GM12878 (cell line): ENCODE measurements at regions of chr6 and their contacts with region 1.

Region 1: GRCh38 chr6:156719720-156720563 is 57.2 kb upstream of the ARID1B start:
- DNase-seq: peak; percentile 65
- ATAC-seq: peak; percentile 89
- H3K4me3 ChIP-seq: peak overlapping the region; percentile 58
- H3K27ac ChIP-seq: peak overlapping the region; percentile 96
- H3K4me1 ChIP-seq: peaks cover 37% of the 10 kb centered on the region
- H3K27me3 ChIP-seq: no peaks in the 10 kb centered on the region
- CTCF ChIP-seq: no peak
- EP300 ChIP-seq: peak; percentile 23 to 59; a peak in 2 of 4 replicates
- POLR2A ChIP-seq: peak; percentile 77
- RAD21 ChIP-seq: no peak

Region 2: DNA sequence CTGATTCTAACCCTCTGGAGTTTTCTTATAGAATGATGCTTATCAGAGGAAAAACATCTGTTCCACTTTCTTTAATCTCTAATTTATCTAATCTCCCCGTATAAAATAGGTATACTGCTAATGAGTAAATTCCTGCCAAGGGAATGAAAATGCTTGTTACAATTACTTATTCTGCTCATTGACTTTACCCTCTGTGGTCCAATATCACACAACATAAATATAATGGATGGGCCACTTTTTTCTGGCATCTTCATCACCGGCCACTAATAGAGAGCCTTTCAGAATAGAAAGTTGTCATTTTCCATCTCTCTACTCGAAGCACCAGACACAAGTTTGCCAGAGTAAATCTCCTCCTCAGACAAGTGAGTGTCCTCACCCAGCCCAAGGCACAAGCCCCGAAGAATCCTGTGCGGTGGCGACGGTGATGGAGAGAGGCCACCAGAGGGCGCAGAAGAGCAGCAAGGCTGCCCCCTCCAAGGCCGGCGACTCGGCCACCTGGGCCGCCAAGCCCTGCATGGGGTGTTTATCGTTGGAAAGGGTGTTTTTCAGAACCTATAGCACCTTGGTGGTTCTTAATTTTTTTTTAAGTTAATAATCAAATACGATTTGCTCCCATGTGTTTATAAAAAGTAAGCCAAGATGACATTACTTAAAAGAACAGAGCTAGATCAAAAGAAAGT is 155.7 kb before region 1 on chr6:
- CTCF ChIA-PET with region 1: interaction called, 5 read pairs
- POLR2A ChIA-PET with region 1: no interaction called
- RAD21 ChIA-PET with region 1: interaction called, 9 read pairs
- SMC1A ChIA-PET with region 1: interaction called, 4 read pairs
- in situ Hi-C with region 1: no loop called
- intact Hi-C with region 1: loop called (anchors 1 kb)
- DNase-seq: peak; percentile 46
- ATAC-seq: peak; percentile 100
- H3K4me3 ChIP-seq: no peak overlapping the region
- H3K27ac ChIP-seq: no peak overlapping the region
- H3K4me1 ChIP-seq: no peaks in the 10 kb centered on the region
- H3K27me3 ChIP-seq: no peaks in the 10 kb centered on the region; a peak in 1 of 4 replicates
- CTCF ChIP-seq: peak; percentile 91 to 94 (median 93)
- EP300 ChIP-seq: no peak
- POLR2A ChIP-seq: no peak
- RAD21 ChIP-seq: peak; percentile 97

Region 3: GRCh38 chr6:156658186-156658966 is 61.6 kb before region 1 on chr6:
- CTCF ChIA-PET with region 1: no interaction called
- POLR2A ChIA-PET with region 1: interaction called, 3 read pairs
- RAD21 ChIA-PET with region 1: interaction called, 11 read pairs
- SMC1A ChIA-PET with region 1: interaction called, 7 read pairs
- in situ Hi-C with region 1: no loop called
- intact Hi-C with region 1: no loop called
- DNase-seq: no peak
- ATAC-seq: no peak
- H3K4me3 ChIP-seq: no peak overlapping the region
- H3K27ac ChIP-seq: no peak overlapping the region
- H3K4me1 ChIP-seq: peaks cover 17% of the 10 kb centered on the region
- H3K27me3 ChIP-seq: no peaks in the 10 kb centered on the region
- CTCF ChIP-seq: no peak
- EP300 ChIP-seq: no peak
- POLR2A ChIP-seq: no peak
- RAD21 ChIP-seq: no peak

Region 4: DNA sequence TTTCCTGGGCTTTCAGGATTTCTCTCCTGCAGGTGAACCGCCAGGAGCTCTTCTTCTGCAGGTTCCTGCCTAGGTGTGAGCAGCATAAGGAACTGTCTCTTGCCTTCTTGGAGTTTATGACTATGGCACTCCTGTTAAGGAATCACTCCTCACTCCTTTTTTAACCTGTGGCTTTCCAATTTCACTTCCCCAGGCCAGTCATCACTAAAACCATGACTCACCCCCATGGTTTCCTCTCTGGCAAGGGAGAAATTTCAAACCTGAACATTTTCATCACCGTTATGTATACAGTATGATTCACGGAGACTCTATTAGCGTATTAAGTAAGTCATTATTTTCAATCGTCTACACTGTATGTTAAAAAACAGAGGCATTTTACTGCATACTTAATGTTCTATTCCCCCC is 20.9 kb before region 1 on chr6:
- CTCF ChIA-PET with region 1: interaction called, 13 read pairs
- POLR2A ChIA-PET with region 1: interaction called, 33 read pairs
- RAD21 ChIA-PET with region 1: interaction called, 136 read pairs
- SMC1A ChIA-PET with region 1: interaction called, 266 read pairs
- in situ Hi-C with region 1: no loop called
- intact Hi-C with region 1: loop called (anchors 1 kb)
- DNase-seq: peak; percentile 85
- ATAC-seq: peak; percentile 66
- H3K4me3 ChIP-seq: peak overlapping the region; percentile 65
- H3K27ac ChIP-seq: peak overlapping the region; percentile 97
- H3K4me1 ChIP-seq: peaks cover 57% of the 10 kb centered on the region
- H3K27me3 ChIP-seq: no peaks in the 10 kb centered on the region
- CTCF ChIP-seq: no peak
- EP300 ChIP-seq: peak; percentile 85 to 92
- POLR2A ChIP-seq: no peak; the same call in 1 of the 2 replicates
- RAD21 ChIP-seq: peak; percentile 39; the same call in 1 of the 2 replicates

Region 5: DNA sequence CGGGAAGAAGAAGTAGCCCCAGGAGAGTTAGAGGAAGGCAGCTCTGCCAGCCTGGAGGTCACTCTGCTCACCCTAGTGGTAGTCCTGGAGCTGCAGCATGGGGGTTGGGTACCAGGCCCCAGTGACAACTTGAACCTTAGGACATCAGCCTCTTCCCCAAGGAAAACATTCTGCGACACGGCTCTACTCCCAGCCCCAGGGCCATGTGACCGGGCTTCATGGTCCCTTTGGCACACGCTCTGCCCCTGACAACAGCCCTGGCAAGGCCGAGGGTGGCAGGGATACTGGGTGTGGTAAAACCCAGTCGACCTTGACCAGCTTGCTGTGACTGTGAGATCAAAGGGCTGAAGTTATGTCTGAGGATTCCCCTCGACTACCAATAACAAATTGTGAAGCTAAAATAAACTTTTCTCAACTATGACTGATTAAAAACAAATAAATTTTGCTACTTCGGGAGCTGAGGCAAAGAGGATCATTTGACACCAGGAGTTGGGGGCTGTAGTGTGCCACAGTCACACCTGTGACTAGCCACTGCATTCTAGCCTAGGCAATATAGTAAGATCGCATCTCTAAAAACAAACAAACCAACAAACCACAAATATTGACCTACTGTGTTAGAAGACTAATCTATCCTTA is 32.8 kb after region 1 on chr6:
- CTCF ChIA-PET with region 1: interaction called, 42 read pairs
- POLR2A ChIA-PET with region 1: interaction called, 36 read pairs
- RAD21 ChIA-PET with region 1: interaction called, 119 read pairs
- SMC1A ChIA-PET with region 1: interaction called, 121 read pairs
- in situ Hi-C with region 1: no loop called
- intact Hi-C with region 1: loop called (anchors 2 kb)
- DNase-seq: peak; percentile 63
- ATAC-seq: peak; percentile 94
- H3K4me3 ChIP-seq: no peak overlapping the region
- H3K27ac ChIP-seq: no peak overlapping the region
- H3K4me1 ChIP-seq: peaks cover 25% of the 10 kb centered on the region
- H3K27me3 ChIP-seq: no peaks in the 10 kb centered on the region
- CTCF ChIP-seq: peak; percentile 40 to 67 (median 43); a peak in 5 of 6 replicates
- EP300 ChIP-seq: peak in 1 of 2 experiments; percentile 53; a peak in 1 of 4 replicates
- POLR2A ChIP-seq: no peak
- RAD21 ChIP-seq: no peak; the same call in 1 of the 2 replicates

Region 6: DNA sequence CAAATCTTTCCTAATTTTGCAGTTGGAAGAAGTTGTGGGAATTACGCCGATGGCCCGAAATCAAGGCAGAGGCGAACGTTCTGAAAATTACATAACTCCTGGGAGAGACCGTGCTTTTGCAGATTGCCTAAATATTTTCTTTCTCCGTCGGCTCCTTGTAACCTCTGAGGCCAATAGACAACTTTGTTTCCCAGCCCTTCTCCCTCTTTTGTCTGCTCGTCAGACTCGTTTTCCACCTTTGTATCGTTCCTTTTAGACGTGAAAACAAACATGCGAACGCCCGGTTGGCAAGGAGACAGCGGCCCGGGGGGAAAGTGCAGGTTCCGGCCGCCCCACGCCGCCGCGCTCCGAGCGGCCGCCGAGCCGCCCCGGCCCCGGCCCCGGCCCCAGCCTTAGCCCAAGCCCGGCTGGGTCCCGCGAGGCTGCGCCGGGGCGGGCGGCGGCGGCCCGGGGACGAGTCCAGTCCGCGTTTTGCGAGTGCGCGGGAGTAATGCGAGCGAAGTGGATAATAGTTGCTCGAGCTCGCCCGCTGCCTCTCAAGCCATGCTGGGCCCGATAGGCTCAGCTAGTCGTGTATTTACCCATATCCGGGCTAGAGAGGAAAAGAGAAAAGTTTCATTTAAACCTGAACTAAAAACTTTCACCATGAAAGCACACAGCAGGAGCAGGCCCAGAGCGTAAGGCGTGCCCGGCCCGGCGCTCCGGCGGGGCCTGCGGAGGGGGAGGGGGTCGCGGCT is 57.1 kb after region 1 on chr6 and contains the start of gene ARID1B:
- CTCF ChIA-PET with region 1: interaction called, 6 read pairs
- POLR2A ChIA-PET with region 1: interaction called, 19 read pairs
- RAD21 ChIA-PET with region 1: interaction called, 32 read pairs
- SMC1A ChIA-PET with region 1: interaction called, 21 read pairs
- in situ Hi-C with region 1: no loop called
- intact Hi-C with region 1: loop called (anchors 2 kb)
- DNase-seq: no peak
- ATAC-seq: peak; percentile 59
- H3K4me3 ChIP-seq: peak within 1 kb of the TSS; percentile 92
- H3K27ac ChIP-seq: peak within 1 kb of the TSS; percentile 94
- H3K4me1 ChIP-seq: peaks cover 17% of the 10 kb centered on the region
- H3K27me3 ChIP-seq: no peaks in the 10 kb centered on the region
- CTCF ChIP-seq: no peak
- EP300 ChIP-seq: no peak
- POLR2A ChIP-seq: peak; percentile 76
- RAD21 ChIP-seq: no peak
- polyA plus RNA-seq, gene ARID1B: 37.7 to 73.9 TPM

Region 7: DNA sequence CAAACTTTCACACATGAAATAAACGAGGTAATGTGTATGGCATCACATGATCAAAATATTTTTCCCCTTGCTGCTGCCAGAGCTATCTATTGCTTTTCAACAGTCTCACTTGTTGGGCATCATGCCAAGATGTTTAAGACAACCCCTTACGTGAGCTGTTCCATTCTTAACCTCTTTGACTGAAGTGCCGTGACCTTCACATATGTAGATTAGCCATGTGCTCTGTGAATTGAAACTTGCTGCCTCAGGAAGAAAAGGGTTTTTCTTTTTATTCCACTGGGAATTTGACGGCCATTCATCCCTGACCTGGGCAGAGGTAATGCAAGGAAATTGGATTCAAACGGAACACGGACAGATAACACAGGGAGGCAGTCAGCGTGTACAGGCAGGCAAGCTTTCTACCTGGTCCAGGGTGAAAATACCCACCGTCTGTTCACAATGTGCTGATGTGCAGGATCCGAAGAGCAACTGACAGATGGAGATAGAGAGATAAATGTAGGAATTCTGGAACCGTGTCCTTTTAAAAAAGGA is 71.4 kb after region 1 on chr6:
- CTCF ChIA-PET with region 1: no interaction called
- POLR2A ChIA-PET with region 1: interaction called, 5 read pairs
- RAD21 ChIA-PET with region 1: interaction called, 8 read pairs
- SMC1A ChIA-PET with region 1: interaction called, 26 read pairs
- in situ Hi-C with region 1: no loop called
- intact Hi-C with region 1: no loop called
- DNase-seq: peak; percentile 72
- ATAC-seq: peak; percentile 56
- H3K4me3 ChIP-seq: peak overlapping the region; percentile 24; the same call in 1 of the 2 replicates
- H3K27ac ChIP-seq: peak overlapping the region; percentile 23
- H3K4me1 ChIP-seq: peaks cover 50% of the 10 kb centered on the region
- H3K27me3 ChIP-seq: no peaks in the 10 kb centered on the region
- CTCF ChIP-seq: no peak
- EP300 ChIP-seq: no peak
- POLR2A ChIP-seq: 0 out of 2 replicates have a peak, but pooled peaks have one; percentile 36
- RAD21 ChIP-seq: no peak